Panc1 (cell line): ENCODE measurements at regions of chr18 and their contacts with region 1.

Region 1: DNA sequence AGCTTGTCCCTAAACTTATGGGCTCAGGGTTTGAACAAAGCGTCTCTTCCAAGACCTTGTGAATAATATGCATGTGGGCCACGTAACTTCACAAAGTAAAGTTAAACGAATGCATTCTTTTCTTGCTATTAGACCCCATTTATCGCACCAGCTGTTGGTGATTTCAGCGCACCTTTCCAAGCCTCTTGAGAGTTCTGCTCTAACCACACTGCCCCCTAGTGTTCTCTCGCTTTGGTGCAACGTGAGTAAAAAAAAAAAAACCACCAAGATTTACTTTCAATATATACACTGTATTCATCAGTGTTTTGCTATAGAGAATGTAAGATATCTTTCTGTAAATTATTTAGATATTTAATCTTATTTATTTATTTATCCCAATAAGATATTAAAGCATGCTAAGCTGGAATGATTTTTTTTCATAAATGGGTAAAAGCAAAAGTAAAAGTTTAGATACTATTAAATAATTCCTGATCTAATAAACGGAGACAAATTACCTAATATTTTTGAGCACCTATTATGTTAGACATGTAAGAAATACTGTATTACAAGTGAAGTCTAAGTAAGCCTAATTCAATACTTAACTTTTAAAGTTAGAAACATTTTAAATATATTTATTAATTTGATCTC is 459.5 kb downstream of the DLGAP1 start:
- DNase-seq: peak; percentile 52
- ATAC-seq: no peak
- H3K4me3 ChIP-seq: no peak overlapping the region
- H3K27ac ChIP-seq: peak overlapping the region; percentile 3; the same call in 1 of the 2 replicates
- H3K4me1 ChIP-seq: peaks cover 7% of the 10 kb centered on the region; the same call in 1 of the 2 replicates
- H3K27me3 ChIP-seq: no peaks in the 10 kb centered on the region
- CTCF ChIP-seq: peak; percentile 90

Region 2: GRCh38 chr18:3424280-3424890 is 571.2 kb before region 1 on chr18:
- CTCF ChIA-PET with region 1: no interaction called
- POLR2A ChIA-PET with region 1: no interaction called
- in situ Hi-C with region 1: no loop called
- intact Hi-C with region 1: no loop called
- DNase-seq: no peak
- ATAC-seq: no peak
- H3K4me3 ChIP-seq: no peak overlapping the region
- H3K27ac ChIP-seq: no peak overlapping the region; the same call in 1 of the 2 replicates
- H3K4me1 ChIP-seq: no peaks in the 10 kb centered on the region
- H3K27me3 ChIP-seq: no peaks in the 10 kb centered on the region
- CTCF ChIP-seq: no peak

Region 3: DNA sequence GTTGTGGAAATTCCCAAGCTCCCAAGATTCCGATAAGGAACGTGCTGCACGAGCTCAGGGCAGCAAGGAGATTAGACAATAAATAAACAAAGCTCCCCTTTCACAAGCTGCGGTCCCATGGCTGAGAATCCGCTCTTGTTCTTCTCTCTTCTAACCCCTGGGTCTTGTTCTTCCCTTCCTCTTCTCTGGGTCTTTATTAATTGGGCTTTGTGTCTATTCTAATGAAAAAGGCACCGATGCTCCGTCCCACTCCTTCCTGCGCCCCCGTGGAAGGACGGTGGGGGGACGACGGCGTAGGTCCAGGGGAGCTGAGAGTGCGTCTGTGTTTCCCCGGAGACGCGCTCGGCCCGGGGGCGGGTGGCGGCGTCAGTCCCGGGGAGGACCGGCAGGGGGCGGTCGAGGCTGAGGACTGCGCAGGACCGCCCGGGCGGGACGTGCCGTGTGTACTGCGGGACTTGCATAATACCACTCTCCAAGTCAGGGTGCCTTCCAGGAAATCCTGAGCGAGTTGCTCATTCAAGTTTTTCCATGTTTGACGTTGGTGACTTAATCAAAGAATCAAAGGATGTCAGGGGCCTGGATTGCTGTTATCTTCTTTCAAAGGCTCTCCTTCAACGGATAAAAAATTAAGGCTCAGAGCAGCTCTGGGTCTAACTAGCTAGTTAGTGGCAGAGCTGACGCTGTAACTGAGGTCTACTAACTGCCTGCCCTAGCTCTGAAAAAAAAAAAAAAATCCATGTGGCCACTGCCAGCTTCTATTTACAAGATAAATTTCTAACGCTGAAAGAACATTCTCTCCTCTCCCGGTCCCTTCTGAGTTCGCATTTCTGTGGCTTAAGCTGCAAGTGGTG is 224.2 kb before region 1 on chr18:
- CTCF ChIA-PET with region 1: interaction called, 11 read pairs
- POLR2A ChIA-PET with region 1: no interaction called
- in situ Hi-C with region 1: no loop called
- intact Hi-C with region 1: loop called (anchors 1 kb)
- DNase-seq: peak; percentile 38
- ATAC-seq: peak; percentile 100
- H3K4me3 ChIP-seq: peak overlapping the region; percentile 42 to 51
- H3K27ac ChIP-seq: peak overlapping the region; percentile 81
- H3K4me1 ChIP-seq: peaks cover 24% of the 10 kb centered on the region
- H3K27me3 ChIP-seq: no peaks in the 10 kb centered on the region
- CTCF ChIP-seq: peak; percentile 98

Region 4: GRCh38 chr18:4333043-4333442 is 337.5 kb after region 1 on chr18:
- CTCF ChIA-PET with region 1: no interaction called
- POLR2A ChIA-PET with region 1: no interaction called
- in situ Hi-C with region 1: no loop called
- intact Hi-C with region 1: no loop called
- DNase-seq: no peak
- ATAC-seq: no peak
- H3K4me3 ChIP-seq: no peak overlapping the region
- H3K27ac ChIP-seq: no peak overlapping the region
- H3K4me1 ChIP-seq: no peaks in the 10 kb centered on the region
- H3K27me3 ChIP-seq: no peaks in the 10 kb centered on the region
- CTCF ChIP-seq: no peak